Activated naive CD4-positive, alpha-beta T cell treated with anti-CD3 and anti-CD28 coated beads for 36 hours (primary cell): ENCODE measurements at regions of chr1 and their contacts with region 1.

Region 1: DNA sequence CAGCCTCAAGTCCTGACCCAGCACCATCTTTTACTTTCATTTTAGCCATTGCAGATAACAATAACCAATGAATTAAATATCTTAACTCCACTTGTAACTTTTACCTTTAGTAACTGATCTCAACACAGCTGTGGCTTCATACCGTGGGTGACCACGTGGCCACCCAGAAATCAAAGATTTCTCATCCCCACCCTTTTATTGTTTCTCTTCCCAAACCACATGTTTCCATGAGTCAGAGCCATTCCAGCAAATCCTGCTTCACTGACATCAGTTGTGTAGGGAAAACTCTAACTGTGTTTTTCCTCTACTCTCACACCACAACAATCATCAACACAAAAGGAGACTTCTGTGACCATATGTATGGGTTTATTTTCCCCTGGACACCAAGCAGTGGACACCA is 25.1 kb upstream of the BRDT start:
- DNase-seq: no peak
- H3K4me3 Mint-ChIP-seq: no peak overlapping the region
- H3K27ac Mint-ChIP-seq: no peak overlapping the region
- H3K4me1 Mint-ChIP-seq: peaks cover 5% of the 10 kb centered on the region
- H3K27me3 Mint-ChIP-seq: no peaks in the 10 kb centered on the region

Region 2: DNA sequence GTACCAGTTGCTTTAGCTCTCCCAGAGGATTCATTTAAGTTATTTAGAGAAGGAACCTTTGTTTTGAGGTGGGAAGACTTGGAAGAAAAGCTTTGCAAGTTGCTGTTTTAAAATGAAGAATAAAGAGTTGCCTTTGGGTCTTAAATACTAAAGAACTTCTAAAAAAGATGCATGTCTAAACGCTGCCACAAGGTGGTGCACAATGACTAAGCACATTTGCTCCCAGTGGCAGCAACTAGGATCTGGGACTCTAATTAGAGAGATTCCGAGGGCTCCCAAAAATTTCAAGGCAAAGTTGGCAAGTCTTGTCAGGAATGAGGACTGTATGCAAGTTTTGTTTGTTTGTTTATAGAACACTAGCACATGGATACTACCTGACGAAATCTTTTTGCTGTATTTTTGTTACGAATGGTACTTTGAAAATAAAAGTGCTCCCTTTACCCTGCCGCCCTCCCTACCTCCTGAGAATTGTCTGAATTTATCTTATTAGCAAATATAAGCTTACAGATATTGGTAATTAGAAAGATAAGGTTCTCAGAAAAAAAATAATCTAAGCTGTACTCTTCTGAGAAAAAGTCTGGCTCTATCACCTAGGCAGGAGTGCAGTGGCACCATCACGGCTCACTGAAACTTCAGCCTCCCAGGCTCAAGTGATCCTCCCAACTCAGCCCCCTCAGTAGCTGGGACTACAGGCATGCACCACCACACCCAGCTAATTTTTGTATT is 641.3 kb before region 1 on chr1:
- CTCF ChIA-PET with region 1: interaction called, 13 read pairs
- intact Hi-C with region 1: loop called (anchors 1 kb)
- DNase-seq: peak; percentile 65
- H3K4me3 Mint-ChIP-seq: no peak overlapping the region
- H3K27ac Mint-ChIP-seq: no peak overlapping the region
- H3K4me1 Mint-ChIP-seq: peaks cover 1% of the 10 kb centered on the region
- H3K27me3 Mint-ChIP-seq: peaks cover 6% of the 10 kb centered on the region

Region 3: DNA sequence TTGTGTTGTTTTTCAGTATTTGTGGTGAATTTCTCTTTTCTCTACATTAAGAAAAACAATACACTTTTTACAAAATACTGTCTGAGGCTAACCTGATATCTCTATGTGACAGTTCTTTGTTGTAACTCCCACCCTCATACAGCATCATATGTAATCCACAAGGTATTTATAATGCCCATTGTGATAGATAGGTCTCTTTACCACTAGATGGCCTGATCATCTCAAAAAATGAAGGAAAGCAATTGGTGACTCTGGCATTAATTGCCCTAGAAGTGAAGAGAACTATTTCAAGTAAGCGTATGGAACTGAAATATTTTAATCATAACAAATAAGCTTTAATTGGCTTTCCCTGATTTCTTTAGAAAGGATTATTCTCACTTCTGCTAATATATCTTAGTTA is 483.3 kb before region 1 on chr1:
- CTCF ChIA-PET with region 1: interaction called, 5 read pairs
- intact Hi-C with region 1: loop called (anchors 2 kb)
- DNase-seq: no peak
- H3K4me3 Mint-ChIP-seq: no peak overlapping the region
- H3K27ac Mint-ChIP-seq: no peak overlapping the region
- H3K4me1 Mint-ChIP-seq: peaks cover 7% of the 10 kb centered on the region
- H3K27me3 Mint-ChIP-seq: peaks cover 16% of the 10 kb centered on the region

Region 4: GRCh38 chr1:91529856-91530255 is 394.3 kb before region 1 on chr1:
- CTCF ChIA-PET with region 1: interaction called, 3 read pairs
- intact Hi-C with region 1: loop called (anchors 1 kb)
- DNase-seq: no peak
- H3K4me3 Mint-ChIP-seq: no peak overlapping the region
- H3K27ac Mint-ChIP-seq: no peak overlapping the region
- H3K4me1 Mint-ChIP-seq: peaks cover 6% of the 10 kb centered on the region
- H3K27me3 Mint-ChIP-seq: no peaks in the 10 kb centered on the region

Region 5: GRCh38 chr1:91660708-91661107 is 263.4 kb before region 1 on chr1:
- CTCF ChIA-PET with region 1: no interaction called
- intact Hi-C with region 1: no loop called
- DNase-seq: no peak
- H3K4me3 Mint-ChIP-seq: no peak overlapping the region
- H3K27ac Mint-ChIP-seq: no peak overlapping the region
- H3K4me1 Mint-ChIP-seq: no peaks in the 10 kb centered on the region
- H3K27me3 Mint-ChIP-seq: no peaks in the 10 kb centered on the region

Region 6: GRCh38 chr1:91791103-91791502 is 133.0 kb before region 1 on chr1:
- CTCF ChIA-PET with region 1: interaction called, 4 read pairs
- intact Hi-C with region 1: loop called (anchors 1 kb)
- DNase-seq: peak; percentile 30
- H3K4me3 Mint-ChIP-seq: no peak overlapping the region
- H3K27ac Mint-ChIP-seq: no peak overlapping the region
- H3K4me1 Mint-ChIP-seq: peaks cover 20% of the 10 kb centered on the region
- H3K27me3 Mint-ChIP-seq: no peaks in the 10 kb centered on the region

Region 7: GRCh38 chr1:92030656-92031107 is 106.5 kb after region 1 on chr1:
- CTCF ChIA-PET with region 1: no interaction called
- intact Hi-C with region 1: no loop called
- DNase-seq: peak; percentile 47
- H3K4me3 Mint-ChIP-seq: peak overlapping the region; percentile 66
- H3K27ac Mint-ChIP-seq: no peak overlapping the region
- H3K4me1 Mint-ChIP-seq: peaks cover 21% of the 10 kb centered on the region
- H3K27me3 Mint-ChIP-seq: peaks cover 24% of the 10 kb centered on the region

Region 8: GRCh38 chr1:92563457-92564216 is 639.5 kb after region 1 on chr1:
- CTCF ChIA-PET with region 1: no interaction called
- intact Hi-C with region 1: no loop called
- DNase-seq: no peak
- H3K4me3 Mint-ChIP-seq: no peak overlapping the region
- H3K27ac Mint-ChIP-seq: no peak overlapping the region
- H3K4me1 Mint-ChIP-seq: peaks cover 24% of the 10 kb centered on the region
- H3K27me3 Mint-ChIP-seq: no peaks in the 10 kb centered on the region

Region 9: DNA sequence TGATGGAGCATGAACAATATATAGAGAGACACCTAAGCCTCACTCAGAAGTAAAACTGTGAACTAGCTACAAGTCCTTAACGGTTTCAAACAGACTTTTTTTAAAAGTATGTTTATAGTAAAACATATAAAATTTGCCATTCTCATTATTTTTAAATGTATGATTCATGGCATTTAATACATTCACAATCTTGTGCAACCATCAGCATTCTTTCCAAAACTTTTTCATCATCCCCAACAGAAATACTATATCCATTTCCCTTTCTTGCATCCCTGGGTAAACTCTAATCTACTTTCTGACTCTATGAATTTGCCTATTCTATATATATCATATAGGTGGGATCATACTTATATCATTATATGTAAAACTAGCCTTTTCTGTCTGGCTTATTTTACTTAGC is 835.2 kb after region 1 on chr1:
- CTCF ChIA-PET with region 1: no interaction called
- intact Hi-C with region 1: no loop called
- DNase-seq: no peak
- H3K4me3 Mint-ChIP-seq: no peak overlapping the region
- H3K27ac Mint-ChIP-seq: no peak overlapping the region
- H3K4me1 Mint-ChIP-seq: no peaks in the 10 kb centered on the region
- H3K27me3 Mint-ChIP-seq: no peaks in the 10 kb centered on the region